RWPE1 (cell line): ENCODE measurements at regions of chr13 and their contacts with region 1.

Region 1: DNA sequence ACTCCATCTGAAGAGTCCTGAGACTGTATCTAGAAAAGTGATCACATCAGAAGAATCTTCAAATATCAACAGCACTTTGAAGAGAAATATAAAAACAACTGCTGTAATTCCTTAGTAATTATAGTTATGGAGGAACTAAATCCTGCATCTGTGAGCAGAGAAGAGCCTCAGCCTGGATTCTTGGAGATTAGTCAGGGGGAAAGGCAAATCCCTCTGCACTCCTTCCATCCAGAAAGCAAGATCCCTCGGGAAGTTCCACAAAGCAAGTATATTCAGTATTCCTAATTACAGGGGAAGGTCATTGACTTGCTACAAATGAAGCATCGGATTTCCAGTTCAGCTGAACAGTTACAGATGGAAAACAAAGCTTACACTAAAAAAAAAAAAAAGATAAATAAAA is 256.6 kb upstream of the IPO5 start:
- DNase-seq: no peak
- H3K27ac ChIP-seq: no peak overlapping the region
- CTCF ChIP-seq: no peak

Region 2: GRCh38 chr13:96314984-96315383 is 1381.9 kb before region 1 on chr13:
- CTCF ChIA-PET with region 1: interaction called, 10 read pairs
- POLR2A ChIA-PET with region 1: no interaction called
- DNase-seq: no peak
- H3K27ac ChIP-seq: no peak overlapping the region
- CTCF ChIP-seq: no peak

Region 3: DNA sequence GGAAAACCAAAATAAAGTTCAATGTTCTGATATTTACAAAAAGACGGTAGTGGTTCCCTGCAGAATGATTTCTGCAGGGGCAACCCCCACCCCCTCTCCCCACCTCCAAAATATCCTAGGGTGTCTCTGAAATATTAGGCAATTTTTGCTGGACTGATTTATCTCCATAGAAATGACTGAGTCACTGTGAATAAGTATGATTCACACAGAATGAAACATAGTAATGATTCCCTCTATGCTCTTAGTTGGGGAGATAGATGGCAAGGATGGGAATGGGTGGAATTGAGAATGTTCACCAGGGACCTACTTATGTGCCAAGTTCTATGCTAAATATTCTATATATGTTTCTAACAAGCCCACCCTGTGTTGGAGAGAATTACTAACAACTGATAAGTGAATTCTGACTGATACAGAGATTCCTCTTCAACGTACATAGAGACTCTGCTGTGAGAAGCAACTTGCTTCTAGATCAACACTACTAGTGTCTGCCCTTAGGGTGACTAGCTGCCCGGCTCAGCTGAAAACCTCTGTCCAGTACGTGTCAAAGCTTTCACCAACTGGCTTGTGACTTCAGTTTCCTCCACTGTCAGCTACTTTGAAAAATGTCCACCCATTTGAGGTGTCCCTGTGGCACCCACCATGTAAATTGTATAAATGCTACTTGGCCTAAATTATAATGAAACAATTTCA is 301.3 kb before region 1 on chr13:
- CTCF ChIA-PET with region 1: no interaction called
- POLR2A ChIA-PET with region 1: no interaction called
- DNase-seq: peak; percentile 61
- H3K27ac ChIP-seq: no peak overlapping the region
- CTCF ChIP-seq: no peak

Region 4: GRCh38 chr13:97911311-97912128 is 214.6 kb after region 1 on chr13:
- CTCF ChIA-PET with region 1: no interaction called
- POLR2A ChIA-PET with region 1: no interaction called
- DNase-seq: no peak
- H3K27ac ChIP-seq: no peak overlapping the region
- CTCF ChIP-seq: no peak